Endothelial cell of umbilical vein (primary cell): ENCODE measurements at regions of chr16 and their contacts with region 1.

Region 1: GRCh38 chr16:70770626-70771552 is 30.1 kb downstream of the VAC14 start:
- DNase-seq: peak; percentile 71
- H3K4me3 ChIP-seq: no peak overlapping the region
- H3K27ac ChIP-seq: no peak overlapping the region
- H3K4me1 ChIP-seq: no peaks in the 10 kb centered on the region
- H3K27me3 ChIP-seq: no peaks in the 10 kb centered on the region
- CTCF ChIP-seq: peak; percentile 88 to 89
- POLR2A ChIP-seq: no peak

Region 2: GRCh38 chr16:70529051-70529777 is 241.7 kb before region 1 on chr16:
- CTCF ChIA-PET with region 1: interaction called, 4 read pairs
- POLR2A ChIA-PET with region 1: no interaction called
- dilution Hi-C with region 1: no loop called
- intact Hi-C with region 1: loop called (anchors 1 kb)
- DNase-seq: peak; percentile 69
- H3K4me3 ChIP-seq: no peak overlapping the region
- H3K27ac ChIP-seq: peak overlapping the region; percentile 10
- H3K4me1 ChIP-seq: peaks cover 28% of the 10 kb centered on the region
- H3K27me3 ChIP-seq: no peaks in the 10 kb centered on the region
- CTCF ChIP-seq: peak in 1 of 2 donors; percentile 23
- POLR2A ChIP-seq: no peak

Region 3: GRCh38 chr16:70638814-70639792 is 131.8 kb before region 1 on chr16:
- CTCF ChIA-PET with region 1: no interaction called
- POLR2A ChIA-PET with region 1: no interaction called
- dilution Hi-C with region 1: no loop called
- intact Hi-C with region 1: no loop called
- DNase-seq: no peak
- H3K4me3 ChIP-seq: no peak overlapping the region
- H3K27ac ChIP-seq: no peak overlapping the region
- H3K4me1 ChIP-seq: peaks cover 22% of the 10 kb centered on the region
- H3K27me3 ChIP-seq: no peaks in the 10 kb centered on the region
- CTCF ChIP-seq: no peak
- POLR2A ChIP-seq: no peak

Region 4: DNA sequence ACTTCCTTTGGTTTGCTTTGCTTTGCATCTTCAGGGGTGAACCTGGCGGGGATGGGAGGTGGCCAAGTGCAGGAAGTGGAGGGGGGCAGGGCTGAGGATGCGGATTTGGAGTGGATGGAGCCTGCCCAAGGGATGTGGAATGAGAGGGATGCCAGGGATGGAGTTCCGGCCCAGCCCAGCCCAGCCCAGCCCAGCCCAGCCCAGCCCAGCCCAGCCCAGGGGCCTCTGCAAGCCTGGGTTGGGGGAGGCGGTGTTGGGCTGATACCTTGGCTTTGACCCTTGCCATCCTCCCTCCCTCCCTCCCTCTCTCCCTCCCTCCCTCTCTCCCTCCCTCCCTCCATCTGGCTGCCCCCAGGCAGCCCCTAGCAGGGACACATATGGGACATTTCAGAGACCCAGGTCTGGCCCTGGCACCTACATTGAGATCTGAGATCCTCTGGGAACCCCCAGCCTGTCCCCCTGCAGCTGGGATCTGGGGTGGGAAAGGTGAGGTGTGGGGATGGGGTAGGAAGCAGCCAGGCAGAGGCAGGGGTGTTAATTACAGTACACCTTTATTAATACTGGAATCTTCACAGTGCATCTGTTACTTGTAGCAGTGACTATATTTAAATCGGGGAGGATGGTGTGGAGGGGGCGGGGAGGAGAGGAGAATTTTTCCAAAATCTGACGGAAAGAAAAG is 110.1 kb before region 1 on chr16:
- CTCF ChIA-PET with region 1: interaction called, 69 read pairs
- POLR2A ChIA-PET with region 1: no interaction called
- dilution Hi-C with region 1: no loop called
- intact Hi-C with region 1: no loop called
- DNase-seq: no peak
- H3K4me3 ChIP-seq: no peak overlapping the region
- H3K27ac ChIP-seq: no peak overlapping the region
- H3K4me1 ChIP-seq: no peaks in the 10 kb centered on the region
- H3K27me3 ChIP-seq: no peaks in the 10 kb centered on the region
- CTCF ChIP-seq: no peak
- POLR2A ChIP-seq: no peak

Region 5: DNA sequence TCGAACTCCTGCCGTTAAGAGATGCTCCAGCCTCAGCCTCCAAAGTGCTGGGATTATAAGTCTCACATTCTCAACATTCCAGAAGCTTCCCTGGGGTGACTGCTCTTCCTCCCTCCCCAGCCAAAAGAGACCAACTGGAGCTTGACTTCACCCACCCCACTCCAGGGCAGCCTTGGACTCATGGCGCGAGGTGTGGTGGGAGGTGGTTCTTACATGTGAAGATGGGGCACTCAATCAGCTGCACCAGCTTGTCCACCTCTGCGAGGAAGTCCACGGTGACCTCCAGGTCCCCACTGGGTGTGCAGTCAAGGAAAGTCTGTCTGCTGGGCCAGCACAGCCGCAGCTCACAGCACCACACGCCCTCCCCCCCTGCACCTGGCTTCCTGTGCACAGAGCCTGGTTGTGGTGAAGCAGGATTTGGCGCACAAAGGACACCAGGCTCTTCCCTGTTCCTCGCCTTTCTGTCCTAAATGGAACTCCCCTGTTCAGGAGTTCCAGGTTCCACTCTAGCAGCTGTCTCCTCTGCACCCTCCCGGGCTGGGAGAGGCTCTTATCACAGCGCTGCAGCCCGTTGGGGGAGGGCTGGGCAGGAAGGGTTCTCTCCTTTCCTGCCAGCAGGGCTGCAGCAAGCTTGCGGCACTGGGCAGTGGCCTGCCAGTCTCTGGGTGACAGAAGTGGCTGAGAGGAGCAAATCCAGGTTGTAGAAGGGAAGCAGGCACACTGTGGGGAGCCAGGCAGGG is 75.4 kb before region 1 on chr16:
- CTCF ChIA-PET with region 1: interaction called, 19 read pairs
- POLR2A ChIA-PET with region 1: no interaction called
- dilution Hi-C with region 1: no loop called
- intact Hi-C with region 1: no loop called
- DNase-seq: peak; percentile 86
- H3K4me3 ChIP-seq: no peak overlapping the region
- H3K27ac ChIP-seq: peak overlapping the region; percentile 24
- H3K4me1 ChIP-seq: peaks cover 35% of the 10 kb centered on the region
- H3K27me3 ChIP-seq: no peaks in the 10 kb centered on the region
- CTCF ChIP-seq: peak in 1 of 2 donors; percentile 39
- POLR2A ChIP-seq: no peak

Region 6: GRCh38 chr16:70750893-70751475 is 19.9 kb before region 1 on chr16:
- CTCF ChIA-PET with region 1: interaction called, 42 read pairs
- POLR2A ChIA-PET with region 1: interaction called, 3 read pairs
- dilution Hi-C with region 1: no loop called
- intact Hi-C with region 1: no loop called
- DNase-seq: peak; percentile 90
- H3K4me3 ChIP-seq: no peak overlapping the region
- H3K27ac ChIP-seq: peak overlapping the region; percentile 19
- H3K4me1 ChIP-seq: peaks cover 28% of the 10 kb centered on the region
- H3K27me3 ChIP-seq: no peaks in the 10 kb centered on the region
- CTCF ChIP-seq: no peak
- POLR2A ChIP-seq: peak; percentile 36